GM10248 (cell line): ENCODE measurements at regions of chr7 and their contacts with region 1.

Region 1: DNA sequence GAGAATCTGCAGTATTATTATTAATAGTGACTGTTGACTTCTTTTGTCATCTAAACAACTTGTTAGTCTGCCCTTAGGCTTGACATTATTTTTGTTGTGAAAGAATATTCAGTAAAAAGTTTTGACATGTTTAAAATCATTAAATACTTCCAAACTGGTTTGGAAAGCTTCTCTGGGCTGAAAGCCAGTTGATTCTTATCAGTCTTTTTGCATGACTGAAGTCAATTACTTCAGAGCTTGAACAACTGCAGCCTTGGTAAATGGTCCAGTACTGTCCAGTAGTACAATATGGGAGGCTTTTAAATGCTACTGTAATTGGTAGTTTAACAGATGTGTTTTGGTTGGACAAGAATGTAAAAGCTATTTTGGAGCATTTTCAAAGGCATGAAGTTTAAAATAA is 103.4 kb downstream of the SDK1 start:
- DNase-seq: no peak
- CTCF ChIP-seq: no peak

Region 2: DNA sequence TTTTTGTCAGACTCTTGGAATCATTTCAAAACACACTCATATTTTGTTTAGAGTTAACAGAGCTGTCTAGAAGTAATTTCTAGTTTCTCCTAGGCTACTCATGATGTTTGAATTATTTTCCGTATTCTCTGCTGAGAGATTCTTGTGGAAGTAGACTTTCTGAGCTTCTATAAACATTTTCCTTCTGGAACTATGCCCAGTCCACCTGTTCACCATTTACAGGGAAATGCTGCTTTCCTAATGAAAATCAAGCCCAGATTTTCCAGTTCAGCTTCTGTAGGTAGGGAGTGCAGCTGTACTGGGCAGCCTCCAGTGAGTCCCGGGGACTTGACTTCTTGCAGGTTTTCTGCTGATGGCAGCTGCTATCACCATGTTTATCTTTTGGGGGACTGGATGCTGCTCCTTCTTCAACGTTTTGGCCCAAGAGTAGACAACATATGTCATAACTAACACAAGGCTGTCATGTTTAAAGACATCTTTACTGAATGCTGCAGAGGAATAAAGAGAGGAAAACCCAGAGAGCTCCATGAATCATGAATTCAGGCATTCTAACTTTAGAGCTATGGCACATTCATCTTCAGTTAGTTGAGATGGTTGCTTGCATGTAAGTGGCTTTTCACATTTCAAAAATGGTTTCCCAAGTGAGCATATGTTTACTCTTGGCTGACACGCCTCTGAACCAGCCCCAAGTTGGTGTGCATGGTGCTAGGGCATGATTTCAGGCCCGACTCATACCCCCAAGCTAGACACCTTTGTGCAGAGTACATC is 17.8 kb before region 1 on chr7:
- CTCF ChIA-PET with region 1: interaction called, 19 read pairs
- POLR2A ChIA-PET with region 1: no interaction called
- DNase-seq: no peak
- CTCF ChIP-seq: no peak

Region 3: DNA sequence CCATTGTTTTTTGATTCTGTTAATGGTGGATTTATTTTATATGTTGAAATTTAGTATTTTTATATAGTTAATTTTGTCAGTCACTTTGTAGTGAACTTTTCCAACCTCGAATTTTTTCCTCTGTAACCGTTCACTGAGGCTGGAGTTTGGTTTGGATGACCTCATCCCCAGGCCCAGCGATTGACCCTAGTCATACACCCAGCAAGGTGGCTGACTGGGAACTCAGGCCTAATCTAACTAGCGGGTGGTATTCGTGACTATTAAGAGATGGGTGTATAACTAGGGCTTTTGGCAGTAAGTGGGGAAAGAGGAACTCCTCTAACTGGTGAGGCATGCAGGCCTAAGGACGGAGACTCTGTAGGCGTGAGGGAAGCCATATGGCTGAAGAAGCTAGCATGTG is 72.1 kb after region 1 on chr7:
- CTCF ChIA-PET with region 1: no interaction called
- POLR2A ChIA-PET with region 1: no interaction called
- DNase-seq: no peak
- CTCF ChIP-seq: no peak